ENCODE measurements at regions of chr2 and their contacts with region 1.

Region 1: DNA sequence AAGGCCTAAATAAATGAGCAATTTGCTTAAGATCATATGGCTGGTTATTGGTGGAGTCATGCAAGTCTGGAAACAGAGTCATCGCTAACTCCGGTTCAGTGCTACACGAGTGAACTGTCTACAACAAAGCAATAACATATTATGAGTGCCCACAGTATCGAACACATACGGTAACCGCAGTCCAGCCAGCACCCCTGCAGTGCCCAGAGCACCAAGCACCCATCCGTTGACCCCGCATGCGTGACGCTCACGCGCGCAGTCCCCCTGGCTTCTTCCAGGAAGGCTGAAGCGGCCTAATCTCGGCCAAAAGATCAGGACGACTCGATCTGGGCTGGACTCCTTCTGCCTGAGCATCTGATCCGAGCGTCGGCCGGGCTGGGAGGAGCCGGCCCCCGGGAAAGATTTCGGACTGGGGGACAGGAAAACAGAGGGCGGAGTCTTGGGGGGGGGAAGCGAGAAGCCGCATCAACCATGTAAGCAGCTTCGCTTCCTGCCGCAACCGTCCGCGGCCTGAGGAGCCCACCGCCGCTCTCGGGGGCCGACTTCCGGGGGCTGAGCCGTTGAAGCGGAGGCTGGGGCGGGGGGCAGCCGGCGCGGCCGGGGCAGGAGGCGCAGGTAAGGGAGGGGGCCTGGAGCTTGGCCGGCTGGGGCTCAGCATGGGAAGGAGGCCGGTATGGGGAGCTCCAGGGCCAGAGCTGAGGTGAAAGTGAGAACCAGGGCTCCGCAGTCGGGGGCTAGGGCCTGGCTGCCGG is at the start of gene PIKFYVE:
- DNase-seq: peak; percentile 80 to 92 (median 87)
- H3K4me3 ChIP-seq: peak within 1 kb of the TSS; percentile 95
- H3K4me3 Mint-ChIP-seq: peak within 1 kb of the TSS; percentile 87 to 97 (median 95)
- H3K27ac ChIP-seq: peak within 1 kb of the TSS; percentile 82
- H3K27ac Mint-ChIP-seq: peak within 1 kb of the TSS; percentile 81 to 99 (median 95)
- H3K4me1 ChIP-seq: peaks cover 25% of the 10 kb centered on the region
- H3K4me1 Mint-ChIP-seq: peaks cover 44 to 62% (median 53%) of the 10 kb centered on the region in 3 donors
- H3K27me3 ChIP-seq: no peaks in the 10 kb centered on the region
- H3K27me3 Mint-ChIP-seq: no peaks in the 10 kb centered on the region
- total RNA-seq, gene PIKFYVE: 14.1 to 14.8 TPM

Region 2: GRCh38 chr2:208254871-208255556 is 11.0 kb before region 1 on chr2 and contains the start of gene IDH1:
- CTCF ChIA-PET with region 1: interaction called, 89 read pairs
- POLR2A ChIA-PET with region 1: interaction called, 26 read pairs
- DNase-seq: peak; percentile 86 to 98 (median 94)
- H3K4me3 ChIP-seq: peak within 1 kb of the TSS; percentile 88
- H3K4me3 Mint-ChIP-seq: peak within 1 kb of the TSS; percentile 97 to 100 (median 99)
- H3K27ac ChIP-seq: peak within 1 kb of the TSS; percentile 64
- H3K27ac Mint-ChIP-seq: peak within 1 kb of the TSS; percentile 57 to 96 (median 94)
- H3K4me1 ChIP-seq: peaks cover 12% of the 10 kb centered on the region
- H3K4me1 Mint-ChIP-seq: peaks cover 19 to 35% (median 25%) of the 10 kb centered on the region in 3 donors
- H3K27me3 ChIP-seq: no peaks in the 10 kb centered on the region
- H3K27me3 Mint-ChIP-seq: no peaks in the 10 kb centered on the region
- total RNA-seq, gene IDH1: 18.9 to 21.5 TPM

Measured in CD8-positive, alpha-beta memory T cell (primary cell).